HepG2 (cell line): ENCODE measurements at regions of chr3 and their contacts with region 1.

Region 1: GRCh38 chr3:153161138-153161713 is 800 bp upstream of the RAP2B start:
- DNase-seq: peak; percentile 99
- ATAC-seq: peak; percentile 89
- H3K4me3 ChIP-seq: peak overlapping the region; percentile 85 to 94 (median 94)
- H3K27ac ChIP-seq: peak overlapping the region; percentile 83
- H3K4me1 ChIP-seq: peaks cover 51% of the 10 kb centered on the region
- H3K27me3 ChIP-seq: no peaks in the 10 kb centered on the region; a peak in 1 of 5 replicates
- CTCF ChIP-seq: no peak
- EP300 ChIP-seq: no peak
- POLR2A ChIP-seq: peak in 1 of 2 experiments; percentile 34; a peak in 1 of 4 replicates
- RAD21 ChIP-seq: no peak

Region 2: GRCh38 chr3:153096611-153097202 is 64.5 kb before region 1 on chr3:
- CTCF ChIA-PET with region 1: no interaction called
- POLR2A ChIA-PET with region 1: no interaction called
- in situ Hi-C with region 1: no loop called
- intact Hi-C with region 1: loop called (anchors 5 kb)
- DNase-seq: no peak
- ATAC-seq: no peak
- H3K4me3 ChIP-seq: no peak overlapping the region
- H3K27ac ChIP-seq: no peak overlapping the region
- H3K4me1 ChIP-seq: no peaks in the 10 kb centered on the region
- H3K27me3 ChIP-seq: no peaks in the 10 kb centered on the region
- CTCF ChIP-seq: no peak
- EP300 ChIP-seq: no peak
- POLR2A ChIP-seq: no peak
- RAD21 ChIP-seq: no peak

Region 3: DNA sequence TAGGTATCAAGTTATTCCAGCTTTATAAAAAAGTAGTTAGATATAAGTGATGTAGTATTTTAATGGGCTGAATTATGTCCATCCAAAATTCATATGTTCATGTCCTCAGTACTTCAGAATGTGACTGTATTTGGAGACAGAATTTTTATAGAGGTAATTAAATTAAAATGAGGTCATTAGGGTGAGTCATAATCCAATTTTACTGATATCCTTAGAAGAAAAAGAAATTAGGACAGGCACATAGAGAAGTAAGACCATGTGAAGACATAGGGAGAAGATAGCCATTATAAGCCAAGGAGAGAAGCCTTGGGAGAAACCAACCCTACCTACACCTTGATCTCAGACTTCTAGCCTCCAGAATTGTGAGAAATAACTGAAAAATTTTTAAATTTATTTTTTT is 31.1 kb after region 1 on chr3:
- CTCF ChIA-PET with region 1: no interaction called
- POLR2A ChIA-PET with region 1: no interaction called
- in situ Hi-C with region 1: no loop called
- intact Hi-C with region 1: no loop called
- DNase-seq: no peak
- ATAC-seq: no peak
- H3K4me3 ChIP-seq: no peak overlapping the region
- H3K27ac ChIP-seq: no peak overlapping the region
- H3K4me1 ChIP-seq: no peaks in the 10 kb centered on the region
- H3K27me3 ChIP-seq: no peaks in the 10 kb centered on the region
- CTCF ChIP-seq: no peak
- EP300 ChIP-seq: no peak
- POLR2A ChIP-seq: no peak
- RAD21 ChIP-seq: no peak

Region 4: DNA sequence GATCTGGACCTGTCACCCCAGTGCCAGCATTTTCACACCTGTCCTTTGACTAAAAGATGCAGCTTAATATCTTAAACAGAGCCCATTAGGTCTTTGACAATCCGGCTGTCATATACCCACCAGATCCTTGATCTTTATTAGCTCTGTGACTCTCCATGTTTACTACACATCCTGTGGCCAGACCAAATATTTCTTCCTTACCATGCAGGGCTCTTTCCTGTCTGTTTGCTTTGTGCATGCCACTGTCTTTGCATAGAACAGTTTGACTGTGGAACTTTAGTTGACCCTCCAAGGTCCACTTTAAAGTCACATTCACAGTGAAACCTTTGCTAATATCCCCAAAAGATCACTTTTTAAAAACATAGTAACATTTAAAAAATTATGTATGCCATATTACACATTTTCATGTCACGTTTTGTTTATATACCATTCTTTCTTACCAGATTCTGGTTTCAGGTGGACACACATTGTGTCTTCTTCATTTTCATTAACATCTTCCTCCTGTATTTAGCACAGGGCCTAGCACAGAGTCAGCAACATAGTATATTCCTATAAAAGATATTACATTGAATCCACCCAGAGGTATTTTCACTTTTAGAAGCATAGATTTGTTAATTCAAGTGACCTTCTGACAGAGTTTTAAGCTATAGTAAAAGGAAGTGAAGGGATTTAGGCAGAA is 96.6 kb after region 1 on chr3:
- CTCF ChIA-PET with region 1: no interaction called
- POLR2A ChIA-PET with region 1: no interaction called
- in situ Hi-C with region 1: no loop called
- intact Hi-C with region 1: loop called (anchors 5 kb)
- DNase-seq: peak; percentile 94
- ATAC-seq: peak; percentile 100
- H3K4me3 ChIP-seq: no peak overlapping the region
- H3K27ac ChIP-seq: peak overlapping the region; percentile 73
- H3K4me1 ChIP-seq: peaks cover 51% of the 10 kb centered on the region
- H3K27me3 ChIP-seq: no peaks in the 10 kb centered on the region
- CTCF ChIP-seq: no peak
- EP300 ChIP-seq: peak in 1 of 2 experiments; percentile 93; a peak in 2 of 4 replicates
- POLR2A ChIP-seq: no peak
- RAD21 ChIP-seq: no peak

Region 5: DNA sequence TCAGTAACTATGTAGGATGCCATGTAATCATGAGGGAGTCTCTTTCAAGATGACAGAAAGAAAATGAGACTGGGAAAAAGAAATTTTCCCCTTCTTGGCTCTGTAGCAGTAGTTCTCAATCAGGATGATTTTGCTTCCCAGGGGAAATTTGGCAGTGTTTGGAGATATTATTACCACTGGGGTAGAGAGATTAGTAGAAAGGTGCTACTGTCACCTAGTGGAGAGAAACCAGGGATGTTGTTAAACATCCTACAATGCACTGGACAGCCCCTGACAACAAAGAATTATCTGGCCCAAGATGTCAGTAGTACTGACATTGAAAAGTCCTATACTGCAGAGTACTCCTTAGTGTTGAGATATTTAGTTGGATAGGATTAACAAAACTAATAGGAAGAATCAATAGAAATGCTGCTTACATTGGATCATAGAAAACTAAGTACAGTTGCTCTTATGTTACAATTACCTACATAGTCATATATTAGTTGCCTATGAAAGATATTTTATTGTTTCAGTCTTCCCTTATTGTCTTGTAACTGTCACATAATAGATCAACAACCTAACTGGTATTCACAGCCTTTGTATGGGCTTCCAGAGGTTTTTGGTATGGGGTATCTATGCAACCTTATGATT is 434.1 kb after region 1 on chr3:
- CTCF ChIA-PET with region 1: no interaction called
- POLR2A ChIA-PET with region 1: no interaction called
- in situ Hi-C with region 1: no loop called
- intact Hi-C with region 1: loop called (anchors 5 kb)
- DNase-seq: peak; percentile 18
- ATAC-seq: peak; percentile 77
- H3K4me3 ChIP-seq: no peak overlapping the region
- H3K27ac ChIP-seq: no peak overlapping the region
- H3K4me1 ChIP-seq: peaks cover 16% of the 10 kb centered on the region
- H3K27me3 ChIP-seq: no peaks in the 10 kb centered on the region
- CTCF ChIP-seq: peak; percentile 65
- EP300 ChIP-seq: no peak
- POLR2A ChIP-seq: no peak
- RAD21 ChIP-seq: peak; percentile 33; the same call in 1 of the 2 replicates

Region 6: DNA sequence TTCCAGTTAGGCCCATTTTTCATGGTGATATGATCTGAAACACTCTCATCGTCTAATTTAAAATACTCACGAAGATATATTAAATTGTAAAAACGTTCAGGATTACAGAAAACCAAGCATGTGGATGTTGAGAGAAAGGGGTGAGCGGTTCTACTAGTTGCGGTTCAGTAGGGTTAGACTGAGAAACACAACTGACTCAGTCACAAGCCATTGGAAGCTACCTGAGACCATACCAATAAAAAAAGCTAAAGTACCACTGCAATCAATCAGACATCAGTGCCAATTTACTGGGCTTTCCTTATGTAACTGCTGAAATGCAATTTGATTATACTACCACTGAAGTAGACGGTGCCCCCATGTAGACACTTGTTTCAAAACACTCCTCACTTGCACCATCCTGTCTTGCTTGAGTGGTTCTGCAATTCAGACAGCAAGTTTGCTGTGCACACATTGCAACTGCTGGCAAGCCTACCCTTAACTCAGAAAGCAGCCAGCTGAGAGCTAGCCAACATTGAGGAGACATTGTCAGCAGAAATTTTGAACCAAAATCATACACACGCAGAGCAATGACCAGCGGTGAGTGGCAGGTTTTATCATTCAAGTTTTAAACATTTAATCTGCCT is 591.3 kb after region 1 on chr3:
- CTCF ChIA-PET with region 1: no interaction called
- POLR2A ChIA-PET with region 1: no interaction called
- in situ Hi-C with region 1: no loop called
- intact Hi-C with region 1: no loop called
- DNase-seq: no peak
- ATAC-seq: no peak
- H3K4me3 ChIP-seq: no peak overlapping the region
- H3K27ac ChIP-seq: no peak overlapping the region
- H3K4me1 ChIP-seq: no peaks in the 10 kb centered on the region
- H3K27me3 ChIP-seq: no peaks in the 10 kb centered on the region
- CTCF ChIP-seq: no peak
- EP300 ChIP-seq: no peak
- POLR2A ChIP-seq: no peak
- RAD21 ChIP-seq: no peak